Dendritic cell treated with granulocyte-macrophage colony-stimulating factor and Interleukin-4, amounts not matched to agents 40 ng/mL and 50 ng/mL, for 4 days (primary cell): ENCODE measurements at regions of chr4 and their contacts with region 1.

Region 1: DNA sequence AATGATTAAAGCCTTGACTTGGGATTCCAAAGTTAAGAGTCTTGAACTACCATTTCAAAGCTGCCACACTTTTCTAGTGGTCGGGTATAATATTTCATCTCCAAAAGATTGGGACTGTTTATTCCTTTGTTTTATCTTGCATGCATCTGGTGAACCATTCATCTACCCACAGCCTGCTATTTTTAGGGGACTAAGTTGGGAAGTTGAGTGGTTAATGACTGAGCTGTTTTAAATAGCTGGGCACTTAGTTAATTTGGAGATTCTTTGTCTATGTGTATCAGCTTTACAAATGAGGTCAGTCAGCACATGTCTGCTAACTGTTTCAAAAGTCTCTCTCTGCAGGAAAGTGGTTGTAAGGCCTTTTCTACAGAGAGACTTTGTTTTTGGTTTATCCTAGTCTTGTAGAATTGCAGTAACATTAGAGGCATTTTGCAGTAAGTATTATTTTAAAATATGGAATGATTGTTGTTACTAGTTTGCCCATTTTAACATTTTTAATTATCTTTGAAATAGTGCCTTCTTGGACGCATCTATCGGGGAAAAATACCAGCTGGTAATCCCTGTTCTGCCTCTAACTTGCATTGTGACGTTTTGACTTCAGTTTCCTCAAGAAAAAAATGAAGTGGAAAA is 8.2 kb downstream of the BMP2K start:
- H3K4me3 Mint-ChIP-seq: peak overlapping the region; percentile 1
- H3K27ac Mint-ChIP-seq: peak overlapping the region; percentile 5
- H3K4me1 Mint-ChIP-seq: peaks cover 28% of the 10 kb centered on the region
- H3K27me3 Mint-ChIP-seq: no peaks in the 10 kb centered on the region

Region 2: DNA sequence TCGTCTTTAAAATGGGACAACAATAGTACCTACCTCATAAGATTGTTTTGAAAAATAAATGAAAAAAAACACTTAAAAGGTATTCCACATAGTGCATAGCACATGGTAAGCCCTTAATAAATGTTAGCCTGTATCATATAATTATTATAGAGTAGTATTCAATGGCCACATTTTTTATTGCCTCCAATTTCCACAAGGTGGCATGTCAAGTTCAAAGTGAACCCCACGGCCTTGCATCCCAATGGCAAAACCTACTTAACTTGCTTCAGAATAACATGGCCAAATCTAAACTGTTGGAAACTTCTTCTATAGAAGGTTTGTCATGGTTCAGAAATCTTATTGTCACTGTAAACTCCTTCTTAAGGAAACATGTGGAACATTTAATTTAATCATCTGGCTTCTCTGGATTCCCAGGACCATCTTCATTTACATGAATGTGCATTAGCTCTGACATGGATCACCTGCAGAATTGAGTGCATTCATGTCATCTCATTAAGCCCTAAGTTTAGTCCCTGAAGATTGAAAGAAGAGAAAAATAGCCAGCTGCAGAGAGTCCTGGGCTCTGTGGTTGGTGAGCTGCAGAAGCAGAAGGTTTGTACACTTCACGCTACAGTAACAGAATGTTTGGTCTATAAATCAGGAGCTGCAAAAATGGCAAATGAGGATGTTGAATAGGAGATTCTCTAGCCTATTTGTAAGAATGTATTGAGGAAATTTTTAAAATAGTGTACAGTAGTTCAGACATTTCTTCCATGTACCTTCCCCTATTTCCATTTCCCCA is 171.8 kb before region 1 on chr4:
- intact Hi-C with region 1: loop called (anchors 5 kb)
- H3K4me3 Mint-ChIP-seq: no peak overlapping the region
- H3K27ac Mint-ChIP-seq: no peak overlapping the region
- H3K4me1 Mint-ChIP-seq: peaks cover 34% of the 10 kb centered on the region
- H3K27me3 Mint-ChIP-seq: no peaks in the 10 kb centered on the region

Region 3: DNA sequence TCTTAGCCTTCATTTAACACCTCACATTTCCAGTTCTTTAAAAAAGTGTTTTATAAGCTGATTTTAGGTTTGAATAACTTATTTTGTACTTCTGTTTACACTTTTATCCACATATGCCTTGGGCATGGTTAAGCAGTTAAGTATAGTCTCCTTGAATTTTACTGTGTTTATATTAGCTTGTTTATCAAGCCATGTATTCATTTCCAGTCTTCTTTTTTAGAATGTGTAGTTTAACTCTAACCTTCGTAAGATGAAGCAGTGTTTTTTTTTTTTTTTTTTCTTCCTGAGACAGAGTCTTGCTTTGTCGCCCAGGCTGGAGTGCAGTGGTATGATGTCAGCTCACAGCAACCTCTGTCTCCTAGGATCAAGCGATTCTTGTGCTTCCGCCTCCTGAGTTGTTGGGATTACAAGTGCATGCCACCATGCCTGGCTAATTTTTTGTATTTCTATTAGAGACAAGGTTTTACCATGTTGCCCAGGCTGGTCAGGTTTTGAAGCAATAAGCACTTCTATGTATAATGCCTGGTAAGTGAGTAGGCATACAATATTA is 34.3 kb after region 1 on chr4:
- intact Hi-C with region 1: loop called (anchors 5 kb)
- H3K4me3 Mint-ChIP-seq: no peak overlapping the region
- H3K27ac Mint-ChIP-seq: no peak overlapping the region
- H3K4me1 Mint-ChIP-seq: peaks cover 23% of the 10 kb centered on the region
- H3K27me3 Mint-ChIP-seq: no peaks in the 10 kb centered on the region

Region 4: DNA sequence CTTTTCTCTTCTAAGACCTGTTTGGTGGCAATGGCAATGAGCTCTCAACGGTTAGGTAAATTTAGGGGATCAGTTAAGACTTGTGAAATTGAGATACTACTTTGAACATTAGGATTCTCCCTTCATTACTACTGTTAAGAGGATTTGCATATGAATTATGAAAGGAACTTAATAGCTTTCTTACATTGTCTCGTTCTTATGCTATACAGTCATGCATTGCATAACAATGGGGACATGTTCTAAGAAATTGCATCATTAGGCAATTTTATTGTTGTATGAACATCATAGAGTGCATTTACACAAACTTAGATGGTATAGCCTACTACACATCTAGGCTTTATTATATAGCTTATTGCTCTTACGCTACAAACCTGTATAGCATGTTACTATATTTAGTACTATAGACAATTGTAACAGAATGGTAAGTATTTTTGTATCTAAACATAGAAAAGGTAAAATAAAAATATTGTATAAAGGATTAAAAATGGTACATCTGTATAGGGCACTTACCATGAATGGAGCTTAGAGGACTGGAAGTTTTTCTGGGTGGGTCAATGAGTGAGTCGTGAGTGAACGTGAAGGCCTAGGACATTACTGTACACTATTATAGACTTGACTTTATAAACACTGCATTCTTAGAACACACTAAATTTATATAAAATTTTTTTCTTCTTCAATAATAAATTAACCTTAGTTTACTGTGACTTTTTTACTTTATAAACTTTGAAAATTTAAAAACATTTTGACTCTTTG is 92.4 kb after region 1 on chr4:
- intact Hi-C with region 1: no loop called
- H3K4me3 Mint-ChIP-seq: no peak overlapping the region
- H3K27ac Mint-ChIP-seq: no peak overlapping the region
- H3K4me1 Mint-ChIP-seq: no peaks in the 10 kb centered on the region
- H3K27me3 Mint-ChIP-seq: no peaks in the 10 kb centered on the region